Naive thymus-derived CD4-positive, alpha-beta T cell (primary cell): ENCODE measurements at regions of chr2 and their contacts with region 1.

Region 1: DNA sequence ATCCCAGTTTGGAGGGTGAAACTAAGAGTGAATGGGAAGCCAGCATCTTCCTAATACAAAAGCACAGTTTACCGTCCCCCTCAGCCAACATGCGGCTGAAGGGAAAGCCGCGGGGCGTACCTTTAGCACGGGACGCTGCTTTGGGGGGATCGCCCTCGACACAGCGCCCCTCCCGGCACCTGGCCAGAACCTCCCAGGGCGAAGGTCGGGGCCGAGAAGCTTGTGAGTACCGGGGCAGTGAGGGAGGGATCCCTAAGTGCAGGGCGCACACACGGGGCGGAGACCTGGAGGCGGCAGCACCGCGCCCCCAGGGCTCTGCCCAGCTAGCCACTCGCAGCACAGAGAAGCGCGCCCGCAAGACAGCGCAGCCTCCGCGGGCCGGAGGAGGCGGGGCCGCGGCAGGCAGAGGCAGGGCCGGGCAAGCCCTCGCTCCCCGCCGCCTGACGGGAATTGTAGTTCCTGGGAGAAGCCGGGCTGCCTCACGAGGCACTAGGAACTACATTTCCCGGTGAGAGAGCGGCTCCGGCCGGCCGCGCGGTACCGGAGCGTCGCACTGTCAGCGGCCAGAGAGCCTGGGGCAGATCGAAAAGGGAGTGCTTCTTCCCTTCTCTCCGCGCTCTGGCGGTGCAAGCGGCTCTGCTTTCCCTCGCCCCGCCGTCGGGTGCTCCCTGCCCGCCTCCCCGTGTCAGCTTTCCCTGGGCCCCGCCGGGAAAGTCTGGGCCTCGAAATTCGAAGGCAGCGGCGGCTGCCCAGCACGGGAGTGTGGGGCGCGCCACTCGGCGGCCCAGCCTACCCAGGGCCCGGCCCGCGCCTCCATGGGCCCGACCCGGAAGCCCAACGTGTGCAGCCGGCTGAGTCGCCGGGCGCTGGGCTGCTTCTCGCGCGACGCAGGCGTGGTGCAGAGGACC is at the starts of genes DCAF17 and METTL8:
- DNase-seq: peak; percentile 84 to 93 (median 91)
- ATAC-seq: peak; percentile 95
- H3K4me3 ChIP-seq: peak within 1 kb of the TSS; percentile 87
- H3K4me3 Mint-ChIP-seq: peak within 1 kb of the TSS; percentile 82 to 97 (median 90)
- H3K27ac ChIP-seq: peak within 1 kb of the TSS; percentile 92
- H3K27ac Mint-ChIP-seq: peak within 1 kb of the TSS; percentile 84 to 98 (median 95)
- H3K4me1 ChIP-seq: peaks cover 15 to 28% of the 10 kb centered on the region in 2 donors
- H3K4me1 Mint-ChIP-seq: peaks cover 30 to 56% (median 51%) of the 10 kb centered on the region in 7 donors
- H3K27me3 ChIP-seq: no peaks in the 10 kb centered on the region
- H3K27me3 Mint-ChIP-seq: no peaks in the 10 kb centered on the region
- total RNA-seq, gene DCAF17: 19.0 to 40.3 (median 23.7) TPM
- total RNA-seq, gene METTL8: 11.8 to 21.6 (median 14.8) TPM

Region 2: DNA sequence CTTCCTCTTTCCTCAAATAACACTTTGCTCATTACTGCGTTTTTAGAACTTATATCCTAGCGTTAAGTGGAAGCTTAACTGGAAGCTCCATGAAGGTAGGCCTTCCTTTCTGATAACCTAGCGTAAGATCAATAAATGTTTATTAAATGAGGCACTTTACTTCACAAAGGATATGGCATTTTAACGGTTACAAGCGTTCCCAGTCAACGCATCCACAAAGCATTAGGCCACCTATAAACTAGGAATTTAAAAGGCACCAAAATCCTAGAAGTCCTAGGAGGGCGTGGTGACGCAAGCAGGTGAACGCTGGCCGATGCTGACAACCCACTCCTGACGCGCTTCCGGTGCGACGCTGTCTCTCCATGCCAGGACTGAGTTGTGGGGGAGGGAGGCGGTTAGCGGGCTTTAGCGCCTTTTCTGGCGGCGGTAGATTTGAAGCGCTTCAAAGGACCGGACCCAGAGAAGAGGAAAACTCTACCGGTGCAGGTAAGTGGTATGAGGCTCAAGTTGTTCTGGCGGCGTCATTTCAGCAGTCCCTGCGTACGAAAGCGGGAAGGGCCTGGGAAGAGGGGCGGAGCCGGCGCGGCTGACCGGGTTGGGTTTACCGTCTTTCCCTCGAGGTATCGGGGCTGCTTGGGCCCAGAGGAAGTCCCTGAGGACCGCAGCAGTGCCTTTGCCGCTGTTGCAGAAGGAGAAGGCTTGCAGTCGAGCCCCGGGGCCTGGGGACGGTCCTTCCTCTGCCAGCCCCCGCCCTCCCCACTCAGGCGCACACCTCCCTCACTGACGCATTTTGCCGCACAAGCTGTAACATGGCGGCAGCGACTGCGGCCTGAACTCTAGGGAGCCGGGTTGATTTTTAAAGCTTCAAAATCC is 1849.8 kb before region 1 on chr2 and contains the start of gene PPIG:
- CTCF ChIA-PET with region 1: no interaction called
- POLR2A ChIA-PET with region 1: no interaction called
- intact Hi-C with region 1: loop called in 1 of 2 experiments (anchors 1 kb)
- DNase-seq: peak; percentile 71 to 90 (median 85)
- ATAC-seq: peak; percentile 94
- H3K4me3 ChIP-seq: peak within 1 kb of the TSS; percentile 89
- H3K4me3 Mint-ChIP-seq: peak within 1 kb of the TSS; percentile 90 to 100 (median 99)
- H3K27ac ChIP-seq: peak within 1 kb of the TSS; percentile 99
- H3K27ac Mint-ChIP-seq: peak within 1 kb of the TSS; percentile 97 to 100 (median 100)
- H3K4me1 ChIP-seq: peaks cover 17 to 29% of the 10 kb centered on the region in 2 donors
- H3K4me1 Mint-ChIP-seq: peaks cover 12 to 46% (median 40%) of the 10 kb centered on the region in 7 donors
- H3K27me3 ChIP-seq: no peaks in the 10 kb centered on the region
- H3K27me3 Mint-ChIP-seq: peaks cover 0 to 4% (median 0%) of the 10 kb centered on the region in 5 donors
- total RNA-seq, gene PPIG: 50.6 to 86.1 (median 73.7) TPM

Region 3: DNA sequence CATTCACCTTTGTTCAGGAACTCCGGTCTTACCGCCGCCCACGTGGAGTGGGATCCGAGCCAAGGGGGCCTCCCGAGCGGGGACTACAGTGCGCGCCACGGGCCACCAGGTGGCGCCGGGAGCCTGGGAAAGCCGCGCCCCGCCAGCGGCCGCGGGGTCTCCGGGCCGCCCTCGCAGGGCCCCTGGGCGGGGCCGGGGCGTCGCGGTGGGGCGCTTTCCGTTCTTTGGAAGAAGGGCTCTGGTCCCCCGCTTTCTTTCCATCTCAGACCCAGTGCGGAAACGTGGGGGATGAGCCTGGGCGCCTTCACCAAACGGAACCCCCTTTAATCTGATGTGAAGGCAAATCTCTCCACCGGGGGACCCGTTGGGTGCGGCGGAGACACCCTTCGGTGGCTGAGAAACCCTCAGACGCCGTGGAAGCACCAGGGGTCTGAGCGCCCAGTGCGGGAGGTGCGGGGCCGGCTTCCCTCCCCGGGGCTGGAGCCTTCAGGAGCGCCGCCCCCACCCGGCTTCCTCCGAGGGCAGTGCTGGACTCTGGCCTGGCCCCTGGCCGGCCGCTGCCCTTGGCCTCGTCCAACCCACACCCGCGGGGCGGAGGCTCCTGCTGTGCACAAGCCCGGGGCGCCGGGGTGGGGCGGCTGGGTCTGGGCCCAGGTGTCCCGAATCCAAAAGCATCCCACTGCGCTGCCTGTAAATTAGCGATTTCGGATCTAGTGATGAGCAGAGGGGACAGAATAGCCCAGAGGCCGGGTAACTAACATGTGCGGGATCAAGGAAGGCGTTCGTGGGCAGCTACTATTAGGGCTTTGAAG is 460.3 kb before region 1 on chr2:
- CTCF ChIA-PET with region 1: interaction called, 4 read pairs
- POLR2A ChIA-PET with region 1: interaction called, 8 read pairs
- intact Hi-C with region 1: loop called (anchors 1 kb)
- DNase-seq: peak; percentile 86 to 96 (median 91)
- ATAC-seq: peak; percentile 99
- H3K4me3 ChIP-seq: peak overlapping the region; percentile 84
- H3K4me3 Mint-ChIP-seq: peak overlapping the region; percentile 51 to 87 (median 84)
- H3K27ac ChIP-seq: peak overlapping the region; percentile 67
- H3K27ac Mint-ChIP-seq: peak overlapping the region; percentile 33 to 90 (median 79)
- H3K4me1 ChIP-seq: peaks cover 4 to 11% of the 10 kb centered on the region in 2 donors
- H3K4me1 Mint-ChIP-seq: peaks cover 5 to 20% (median 10%) of the 10 kb centered on the region in 7 donors
- H3K27me3 ChIP-seq: no peaks in the 10 kb centered on the region
- H3K27me3 Mint-ChIP-seq: no peaks in the 10 kb centered on the region

Region 4: GRCh38 chr2:171325886-171326585 is 108.0 kb before region 1 on chr2:
- CTCF ChIA-PET with region 1: no interaction called
- POLR2A ChIA-PET with region 1: no interaction called
- intact Hi-C with region 1: loop called in 1 of 2 experiments (anchors 5 kb)
- DNase-seq: peak in 7 of 9 donors; percentile 11 to 66 (median 41)
- ATAC-seq: peak; percentile 89
- H3K4me3 ChIP-seq: no peak overlapping the region
- H3K4me3 Mint-ChIP-seq: peak overlapping the region in 5 of 10 donors; percentile 4 to 56 (median 27)
- H3K27ac ChIP-seq: no peak overlapping the region
- H3K27ac Mint-ChIP-seq: peak overlapping the region in 8 of 9 donors; percentile 6 to 88 (median 70)
- H3K4me1 ChIP-seq: peaks cover 0 to 17% of the 10 kb centered on the region in 2 donors
- H3K4me1 Mint-ChIP-seq: peaks cover 16 to 41% (median 37%) of the 10 kb centered on the region in 7 donors
- H3K27me3 ChIP-seq: no peaks in the 10 kb centered on the region
- H3K27me3 Mint-ChIP-seq: no peaks in the 10 kb centered on the region

Region 5: DNA sequence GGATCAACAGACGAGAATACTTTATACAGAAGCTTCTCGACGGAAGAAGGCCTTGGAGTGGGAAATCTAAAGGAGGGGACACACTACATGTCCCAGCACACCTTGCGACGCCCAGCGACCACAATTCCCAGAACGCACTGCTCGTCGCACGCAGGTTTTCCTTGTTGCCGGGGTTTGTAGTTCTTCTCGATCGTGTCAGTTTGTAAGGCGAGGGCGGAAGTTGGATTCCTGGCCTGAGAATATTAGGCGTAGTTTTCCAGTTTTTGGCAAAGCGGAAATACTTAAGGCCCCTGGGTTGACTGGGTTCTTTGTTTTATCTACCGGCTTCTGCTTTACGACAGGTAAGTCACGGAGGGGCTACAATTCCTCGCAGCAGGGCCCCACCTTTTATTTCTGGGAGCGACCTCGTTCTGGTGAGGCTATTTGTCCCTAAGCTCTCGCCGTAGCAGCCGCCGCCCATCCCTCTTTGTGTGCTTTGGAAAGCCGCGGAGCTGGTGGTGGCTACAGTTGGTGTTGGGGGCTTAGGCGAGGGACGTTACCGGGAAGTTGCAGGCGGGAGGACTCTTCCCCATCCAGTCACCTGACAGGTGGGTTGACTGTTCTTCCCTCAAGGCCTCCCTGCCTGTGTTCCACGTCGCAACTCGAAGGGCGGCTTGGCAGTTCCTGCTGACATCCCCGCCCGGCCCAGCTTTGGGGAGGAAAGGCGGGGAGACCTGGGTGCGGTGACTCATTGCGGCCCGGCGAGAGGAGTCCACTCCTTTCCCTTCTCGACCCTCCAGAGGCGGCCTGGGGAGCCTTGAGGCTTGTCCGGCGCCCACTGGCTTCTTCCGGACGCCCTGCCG is 253.5 kb after region 1 on chr2 and contains the start of gene DYNC1I2:
- CTCF ChIA-PET with region 1: no interaction called
- POLR2A ChIA-PET with region 1: no interaction called
- intact Hi-C with region 1: loop called (anchors 1 kb)
- DNase-seq: peak; percentile 38 to 82 (median 79)
- ATAC-seq: peak; percentile 90
- H3K4me3 ChIP-seq: peak within 1 kb of the TSS; percentile 96
- H3K4me3 Mint-ChIP-seq: peak within 1 kb of the TSS; percentile 89 to 98 (median 93)
- H3K27ac ChIP-seq: peak within 1 kb of the TSS; percentile 67
- H3K27ac Mint-ChIP-seq: peak within 1 kb of the TSS; percentile 77 to 95 (median 85)
- H3K4me1 ChIP-seq: peaks cover 7 to 10% of the 10 kb centered on the region in 2 donors
- H3K4me1 Mint-ChIP-seq: peaks cover 11 to 43% (median 24%) of the 10 kb centered on the region in 7 donors
- H3K27me3 ChIP-seq: no peaks in the 10 kb centered on the region
- H3K27me3 Mint-ChIP-seq: peaks cover 0 to 21% (median 0%) of the 10 kb centered on the region in 5 donors
- total RNA-seq, gene DYNC1I2: 21.5 to 57.0 (median 41.7) TPM

Region 6: GRCh38 chr2:171999604-172000469 is 565.8 kb after region 1 on chr2 and contains the start of gene METAP1D:
- CTCF ChIA-PET with region 1: no interaction called
- POLR2A ChIA-PET with region 1: no interaction called
- intact Hi-C with region 1: loop called (anchors 5 kb)
- DNase-seq: peak; percentile 74 to 92 (median 82)
- ATAC-seq: peak; percentile 98
- H3K4me3 ChIP-seq: peak within 1 kb of the TSS; percentile 99
- H3K4me3 Mint-ChIP-seq: peak within 1 kb of the TSS; percentile 87 to 99 (median 96)
- H3K27ac ChIP-seq: peak within 1 kb of the TSS; percentile 61
- H3K27ac Mint-ChIP-seq: peak within 1 kb of the TSS; percentile 77 to 97 (median 93)
- H3K4me1 ChIP-seq: peaks cover 0 to 5% of the 10 kb centered on the region in 2 donors
- H3K4me1 Mint-ChIP-seq: peaks cover 5 to 24% (median 22%) of the 10 kb centered on the region in 7 donors
- H3K27me3 ChIP-seq: no peaks in the 10 kb centered on the region
- H3K27me3 Mint-ChIP-seq: peaks cover 6 to 23% (median 9%) of the 10 kb centered on the region in 5 donors
- total RNA-seq, gene METAP1D: 5.3 to 12.2 (median 11.6) TPM

Region 7: GRCh38 chr2:172408143-172408766 is 974.2 kb after region 1 on chr2:
- CTCF ChIA-PET with region 1: no interaction called
- POLR2A ChIA-PET with region 1: no interaction called
- intact Hi-C with region 1: no loop called
- DNase-seq: no peak
- ATAC-seq: no peak
- H3K4me3 ChIP-seq: no peak overlapping the region
- H3K4me3 Mint-ChIP-seq: no peak overlapping the region
- H3K27ac ChIP-seq: no peak overlapping the region
- H3K27ac Mint-ChIP-seq: no peak overlapping the region
- H3K4me1 ChIP-seq: no peaks in the 10 kb centered on the region
- H3K4me1 Mint-ChIP-seq: peaks cover 0 to 7% (median 0%) of the 10 kb centered on the region in 7 donors
- H3K27me3 ChIP-seq: no peaks in the 10 kb centered on the region
- H3K27me3 Mint-ChIP-seq: peaks cover 0 to 31% (median 0%) of the 10 kb centered on the region in 5 donors